ENCODE measurements at regions of chr5 and their contacts with region 1.

Region 1: DNA sequence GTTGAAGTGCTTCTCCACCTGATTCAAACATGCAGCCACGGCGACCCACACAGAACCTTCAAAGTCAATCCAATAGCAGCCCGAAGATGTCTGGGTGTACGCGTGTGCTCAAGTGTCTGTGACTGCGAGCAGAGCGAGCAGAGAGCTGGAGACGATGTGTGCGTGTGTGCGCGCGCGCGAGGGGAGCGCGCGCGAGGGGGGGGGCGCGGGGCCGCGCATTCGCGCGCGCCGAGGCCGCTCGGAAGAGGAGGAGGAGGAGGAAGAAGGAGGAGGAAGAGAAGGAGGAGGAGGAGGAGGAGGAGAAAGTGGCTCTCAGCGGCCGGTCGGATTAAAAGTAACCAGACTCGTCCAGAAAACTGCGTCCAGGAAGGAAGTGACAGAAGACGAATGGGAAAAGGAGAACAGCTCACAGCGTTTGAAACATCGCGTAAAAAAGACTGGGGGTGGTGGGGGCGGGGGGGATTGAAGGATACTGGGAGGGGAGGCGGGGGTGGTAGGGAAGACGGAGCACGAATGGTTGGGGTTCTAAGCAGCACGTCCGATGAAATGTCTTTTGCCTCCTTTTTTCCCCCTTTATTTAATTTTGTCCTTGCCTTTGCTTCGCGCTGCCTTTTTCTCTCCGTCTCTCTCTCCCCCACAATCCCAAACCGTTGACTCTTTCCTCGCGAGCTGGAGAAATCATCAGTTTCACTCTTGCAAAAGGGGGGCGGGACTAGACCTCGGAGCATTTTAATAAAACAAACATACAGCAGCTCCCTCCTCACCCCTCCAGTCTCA is at the start of gene MEF2C:
- DNase-seq: peak in 1 of 2 donors; percentile 17
- ATAC-seq: peak; percentile 62 to 74 (median 69)
- H3K4me3 ChIP-seq: peak within 1 kb of the TSS; percentile 56
- H3K4me3 Mint-ChIP-seq: peak within 1 kb of the TSS; percentile 98
- H3K27ac ChIP-seq: peak within 1 kb of the TSS; percentile 52
- H3K27ac Mint-ChIP-seq: peak within 1 kb of the TSS; percentile 52 to 94
- H3K4me1 ChIP-seq: peaks cover 5% of the 10 kb centered on the region
- H3K4me1 Mint-ChIP-seq: peaks cover 22 to 27% of the 10 kb centered on the region in 2 donors
- H3K27me3 ChIP-seq: no peaks in the 10 kb centered on the region
- H3K27me3 Mint-ChIP-seq: peaks cover 0 to 2% of the 10 kb centered on the region in 2 donors
- CTCF ChIP-seq: no peak
- total RNA-seq, gene MEF2C: 9.2 to 22.0 (median 18.3) TPM

Region 2: GRCh38 chr5:88470745-88471144 is 412.5 kb before region 1 on chr5:
- intact Hi-C with region 1: no loop called
- DNase-seq: no peak
- ATAC-seq: no peak
- H3K4me3 ChIP-seq: no peak overlapping the region
- H3K4me3 Mint-ChIP-seq: no peak overlapping the region
- H3K27ac ChIP-seq: no peak overlapping the region
- H3K27ac Mint-ChIP-seq: no peak overlapping the region
- H3K4me1 ChIP-seq: no peaks in the 10 kb centered on the region
- H3K4me1 Mint-ChIP-seq: no peaks in the 10 kb centered on the region
- H3K27me3 ChIP-seq: peaks cover 3% of the 10 kb centered on the region
- H3K27me3 Mint-ChIP-seq: peaks cover 16 to 33% of the 10 kb centered on the region in 2 donors
- CTCF ChIP-seq: no peak

Region 3: DNA sequence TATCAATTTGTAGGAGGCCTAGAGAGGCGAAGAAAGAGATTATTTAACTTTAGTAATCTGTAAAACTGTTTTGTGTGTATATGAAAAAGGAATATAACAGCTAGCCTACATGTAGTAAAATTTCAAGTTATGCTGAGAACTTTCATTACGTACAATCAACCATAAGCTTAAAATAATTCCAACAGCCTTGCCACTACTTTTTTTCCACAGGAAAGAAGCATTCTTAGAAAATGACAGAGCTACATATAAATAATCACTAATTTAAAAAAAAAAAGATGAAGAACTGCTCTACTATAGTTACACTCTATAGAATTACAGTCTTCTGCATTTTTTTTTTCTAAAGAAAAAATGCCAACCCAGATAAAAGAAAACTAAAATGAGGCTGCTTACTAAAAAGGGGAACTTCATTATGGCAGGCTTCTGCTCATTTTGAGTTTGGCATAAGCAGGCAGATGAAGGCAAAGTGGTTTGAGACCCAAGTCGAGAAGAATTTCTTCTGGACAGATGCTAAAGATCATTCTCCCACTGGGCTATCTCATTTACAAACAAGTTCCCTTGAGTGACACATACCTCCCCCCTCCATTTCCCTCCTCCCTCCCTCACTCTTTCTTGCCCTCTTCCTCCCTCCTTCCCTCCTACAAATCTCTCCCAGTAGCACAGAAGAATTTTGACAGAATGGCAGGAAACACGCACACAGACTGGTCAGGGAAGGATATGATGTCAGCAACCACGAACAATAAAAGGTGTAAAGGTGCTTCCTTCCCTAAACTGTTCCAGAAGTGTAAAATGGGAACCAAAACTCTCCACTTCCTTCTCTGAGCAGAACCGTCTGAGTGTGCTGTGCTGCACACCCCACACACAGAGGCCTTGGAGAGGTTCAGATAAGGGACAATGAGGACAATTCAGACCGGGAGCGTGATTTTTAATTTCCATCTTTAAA is 56.3 kb before region 1 on chr5:
- intact Hi-C with region 1: loop called (anchors 5 kb)
- DNase-seq: peak in 1 of 2 donors; percentile 23
- ATAC-seq: peak; percentile 57 to 66 (median 58)
- H3K4me3 ChIP-seq: no peak overlapping the region
- H3K4me3 Mint-ChIP-seq: no peak overlapping the region
- H3K27ac ChIP-seq: peak overlapping the region; percentile 70
- H3K27ac Mint-ChIP-seq: peak overlapping the region; percentile 53 to 81
- H3K4me1 ChIP-seq: peaks cover 8% of the 10 kb centered on the region
- H3K4me1 Mint-ChIP-seq: peaks cover 34 to 54% of the 10 kb centered on the region in 2 donors
- H3K27me3 ChIP-seq: no peaks in the 10 kb centered on the region
- H3K27me3 Mint-ChIP-seq: peaks cover 0 to 7% of the 10 kb centered on the region in 2 donors
- CTCF ChIP-seq: no peak

Region 4: DNA sequence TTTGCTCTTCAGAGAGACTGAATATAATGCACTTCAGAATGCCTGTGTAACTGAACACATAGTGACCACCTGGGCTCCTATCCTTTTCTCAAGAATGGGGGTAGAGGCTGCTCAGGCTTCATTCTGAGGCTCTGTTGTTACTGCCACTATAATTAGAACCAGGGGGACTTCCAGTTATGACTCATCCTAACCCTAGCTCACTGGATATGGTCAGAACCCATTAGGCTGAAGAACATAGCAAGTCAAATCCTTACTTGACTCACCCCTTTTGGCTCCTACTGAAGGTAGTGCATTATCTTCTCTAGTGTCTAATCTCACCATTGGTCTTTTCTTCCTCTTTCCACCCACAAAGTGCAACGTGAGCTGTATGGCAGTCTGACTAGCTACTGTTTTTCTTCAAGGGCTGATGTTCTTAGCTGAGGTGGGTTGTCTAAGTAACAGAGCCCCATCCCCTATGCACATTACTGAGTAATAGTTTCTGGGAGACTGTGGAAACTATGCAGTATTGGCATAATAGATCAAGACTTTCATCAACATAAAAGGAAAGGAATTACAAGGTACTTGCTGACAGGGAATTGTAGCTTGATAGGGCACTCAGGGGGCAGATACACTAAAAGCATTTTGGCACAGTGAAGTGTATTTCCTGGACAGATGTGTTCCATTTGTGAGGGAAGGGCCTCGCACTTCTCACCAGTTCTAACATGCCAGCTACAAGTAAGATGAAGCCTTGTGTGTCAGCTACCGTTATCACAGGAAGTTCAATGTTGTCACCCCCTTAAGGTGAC is 430.7 kb after region 1 on chr5:
- intact Hi-C with region 1: loop called (anchors 10 kb)
- DNase-seq: peak; percentile 6 to 32
- ATAC-seq: peak; percentile 84 to 92 (median 90)
- H3K4me3 ChIP-seq: no peak overlapping the region
- H3K4me3 Mint-ChIP-seq: no peak overlapping the region
- H3K27ac ChIP-seq: peak overlapping the region; percentile 63
- H3K27ac Mint-ChIP-seq: peak overlapping the region; percentile 70 to 74
- H3K4me1 ChIP-seq: peaks cover 9% of the 10 kb centered on the region
- H3K4me1 Mint-ChIP-seq: peaks cover 21 to 30% of the 10 kb centered on the region in 2 donors
- H3K27me3 ChIP-seq: no peaks in the 10 kb centered on the region
- H3K27me3 Mint-ChIP-seq: no peaks in the 10 kb centered on the region
- CTCF ChIP-seq: no peak

Measured in natural killer cell (primary cell).